Common myeloid progenitor, CD34-positive (primary cell): ENCODE measurements at regions of chr6 and their contacts with region 1.

Region 1: GRCh38 chr6:57004292-57004691 is 42.2 kb upstream of the KIAA1586 start:
- DNase-seq: no peak
- H3K4me3 ChIP-seq: no peak overlapping the region
- H3K27ac ChIP-seq: no peak overlapping the region
- H3K4me1 ChIP-seq: no peaks in the 10 kb centered on the region
- H3K27me3 ChIP-seq: no peaks in the 10 kb centered on the region

Region 2: DNA sequence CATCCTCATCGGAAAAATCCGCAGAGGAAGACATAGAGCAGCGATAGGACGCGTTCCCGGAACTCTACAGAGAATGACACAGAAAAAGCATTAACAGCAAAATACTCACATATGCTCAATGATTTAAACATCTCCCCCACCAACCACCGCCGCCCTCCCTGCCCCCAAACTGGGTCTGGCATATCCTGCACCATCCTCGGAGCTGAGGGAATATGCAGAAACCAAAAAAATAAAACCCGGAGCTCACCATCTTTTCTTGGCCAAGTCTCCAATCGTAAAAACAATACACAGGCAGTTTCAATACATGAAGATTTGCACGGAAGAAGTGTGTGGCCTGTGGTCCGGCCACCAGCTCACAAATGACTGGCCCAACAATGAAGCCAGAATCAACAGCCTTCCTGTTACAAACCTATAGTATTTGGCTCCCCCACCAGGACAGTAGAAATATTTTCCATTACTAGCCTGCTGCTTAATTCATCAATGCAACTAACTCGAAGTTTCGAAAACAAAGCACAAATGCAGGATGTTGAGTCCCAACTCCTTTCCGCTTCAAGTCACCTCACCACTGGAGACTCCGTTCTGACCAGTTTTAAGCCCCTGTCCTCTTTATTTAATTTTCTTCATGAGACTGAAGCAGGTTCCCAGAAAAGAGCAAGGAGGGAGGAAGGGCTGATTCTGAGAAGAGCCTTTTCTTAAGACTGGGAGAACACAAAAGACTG is 152.6 kb before region 1 on chr6:
- CTCF ChIA-PET with region 1: no interaction called
- POLR2A ChIA-PET with region 1: no interaction called
- DNase-seq: peak; percentile 77 to 88 (median 85)
- H3K4me3 ChIP-seq: peak overlapping the region; percentile 56 to 95 (median 76)
- H3K27ac ChIP-seq: no peak overlapping the region
- H3K4me1 ChIP-seq: peaks cover 6 to 22% (median 14%) of the 10 kb centered on the region in 4 experiments
- H3K27me3 ChIP-seq: no peaks in the 10 kb centered on the region

Region 3: DNA sequence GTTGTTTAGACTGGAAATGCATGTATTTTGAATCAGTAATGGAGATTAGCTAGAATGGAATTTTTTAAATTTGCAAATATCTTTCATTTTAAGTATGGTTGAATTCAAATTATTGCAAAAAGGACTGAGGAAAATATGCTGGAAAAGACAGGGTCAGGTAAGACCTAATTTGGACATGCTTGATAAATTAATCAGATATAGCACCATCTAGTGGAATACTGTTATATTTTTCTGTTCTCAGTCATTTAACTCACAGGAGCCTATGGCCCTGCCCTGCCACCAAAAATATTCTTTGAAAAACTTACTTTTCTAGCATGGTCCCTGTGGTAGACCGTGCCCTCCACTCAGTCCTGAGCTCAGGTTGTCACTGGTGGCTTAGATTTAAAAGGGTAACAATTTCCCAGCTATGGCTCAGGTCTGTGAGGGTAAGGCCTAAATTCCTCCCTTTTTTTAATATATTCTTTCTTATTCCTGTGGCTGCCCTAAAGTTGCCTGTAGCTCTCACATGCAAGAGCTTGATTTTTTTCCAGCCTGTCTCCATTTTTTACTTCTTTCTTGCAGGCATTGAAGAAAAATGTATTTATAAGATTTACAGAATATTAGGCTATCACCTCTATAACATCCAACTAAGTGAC is 16.9 kb after region 1 on chr6:
- CTCF ChIA-PET with region 1: interaction called, 10 read pairs
- POLR2A ChIA-PET with region 1: no interaction called
- DNase-seq: peak; percentile 42 to 68 (median 61)
- H3K4me3 ChIP-seq: no peak overlapping the region
- H3K27ac ChIP-seq: no peak overlapping the region
- H3K4me1 ChIP-seq: peaks cover 0 to 3% (median 0%) of the 10 kb centered on the region in 4 experiments
- H3K27me3 ChIP-seq: no peaks in the 10 kb centered on the region